OCI-LY7 (cell line): ENCODE measurements at regions of chr1 and their contacts with region 1.

Region 1: GRCh38 chr1:112955781-112956543 is at the start of gene SLC16A1:
- DNase-seq: peak; percentile 94
- H3K4me3 ChIP-seq: peak within 1 kb of the TSS; percentile 88
- H3K27ac ChIP-seq: peak within 1 kb of the TSS; percentile 87
- H3K4me1 ChIP-seq: peaks cover 45% of the 10 kb centered on the region
- CTCF ChIP-seq: peak; percentile 35; the same call in 1 of the 2 replicates
- total RNA-seq, gene SLC16A1: 50.9 and 56.1 TPM in 2 replicates

Region 2: DNA sequence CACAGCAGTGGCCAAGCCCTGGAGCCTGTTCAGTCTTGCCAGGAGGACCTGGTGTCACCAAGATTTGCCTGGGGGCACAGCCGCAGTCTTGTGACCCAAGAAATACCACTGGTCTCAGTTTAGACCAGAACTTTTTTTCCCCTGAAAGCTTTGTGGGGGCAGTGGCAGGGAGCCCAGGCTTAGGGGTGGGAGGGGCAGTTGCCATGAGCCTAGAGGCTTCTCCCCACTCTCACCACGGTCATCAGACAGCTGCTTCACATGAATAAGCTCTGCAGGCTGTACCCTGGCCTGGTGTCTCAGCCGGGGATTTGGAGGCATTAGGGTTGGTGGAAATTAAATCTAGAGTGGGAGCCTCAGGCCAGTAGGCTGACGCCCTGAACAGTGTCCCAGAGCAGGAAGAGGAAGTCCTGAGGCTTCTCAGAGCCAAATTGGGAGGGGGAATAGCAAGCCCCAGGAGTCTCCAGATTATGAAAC is 73.7 kb before region 1 on chr1:
- CTCF ChIA-PET with region 1: interaction called, 3 read pairs
- POLR2A ChIA-PET with region 1: interaction called, 8 read pairs
- intact Hi-C with region 1: loop called (anchors 2 kb)
- DNase-seq: no peak
- H3K4me3 ChIP-seq: no peak overlapping the region
- H3K27ac ChIP-seq: no peak overlapping the region
- H3K4me1 ChIP-seq: no peaks in the 10 kb centered on the region
- CTCF ChIP-seq: no peak

Region 3: DNA sequence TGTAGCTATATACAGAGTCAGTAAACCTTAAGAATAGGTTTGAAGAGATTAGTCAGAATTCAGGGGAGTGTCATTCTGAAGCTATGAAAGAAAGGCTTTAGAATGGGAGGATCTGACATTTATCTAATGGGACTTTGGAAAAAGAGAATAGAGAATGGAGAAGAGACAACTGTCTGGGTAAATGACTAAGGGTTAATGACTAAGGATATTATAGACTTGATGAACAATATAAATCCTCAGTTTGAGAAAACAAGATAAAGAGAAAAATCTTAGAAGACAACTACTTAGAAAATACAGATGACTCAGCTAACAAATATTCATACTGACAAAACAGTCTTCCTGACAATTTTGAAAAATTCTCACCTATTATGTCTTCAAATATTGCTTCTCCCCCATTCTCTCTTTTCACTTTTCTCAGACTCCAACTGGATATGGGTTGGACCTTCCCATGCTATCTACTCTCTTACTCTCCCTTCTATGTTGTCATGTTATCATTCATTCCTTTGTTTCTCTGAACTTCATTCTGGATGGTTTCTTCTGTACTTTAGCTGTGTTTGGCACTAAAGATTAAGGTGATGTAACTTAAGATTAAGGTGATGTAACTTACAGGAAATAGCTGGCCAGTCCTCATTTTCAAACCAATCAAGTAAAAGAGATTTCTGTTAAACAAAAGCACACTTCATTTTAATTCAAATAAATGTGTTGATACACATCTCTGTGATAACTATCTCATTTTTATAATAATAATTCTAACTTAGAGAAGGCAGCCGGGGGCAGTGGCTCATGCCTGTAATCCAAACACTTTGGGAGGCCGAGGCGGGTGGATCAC is 20.3 kb before region 1 on chr1:
- CTCF ChIA-PET with region 1: interaction called, 4 read pairs
- POLR2A ChIA-PET with region 1: interaction called, 31 read pairs
- intact Hi-C with region 1: loop called (anchors 2 kb)
- DNase-seq: peak; percentile 22
- H3K4me3 ChIP-seq: no peak overlapping the region
- H3K27ac ChIP-seq: peak overlapping the region; percentile 43
- H3K4me1 ChIP-seq: peaks cover 40% of the 10 kb centered on the region
- CTCF ChIP-seq: no peak

Region 4: DNA sequence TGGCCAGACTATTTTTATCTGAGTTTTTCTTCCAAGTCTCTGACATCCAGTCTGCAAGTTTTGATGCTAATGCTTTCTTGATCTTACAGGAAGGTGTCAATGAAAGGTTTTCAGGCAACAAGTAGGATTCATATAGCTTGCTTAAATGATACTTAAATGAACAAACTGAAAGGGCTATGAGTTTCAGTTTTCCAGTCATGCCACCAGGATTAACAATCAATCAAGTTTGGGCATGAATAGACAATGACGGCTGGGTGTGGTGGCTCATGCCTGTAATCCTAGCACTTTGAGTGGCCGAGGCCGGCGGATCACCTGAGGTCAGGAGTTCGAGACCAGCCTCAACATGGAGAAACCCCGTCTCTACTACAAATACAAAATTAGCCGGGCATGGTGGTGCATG is 34.3 kb after region 1 on chr1:
- CTCF ChIA-PET with region 1: no interaction called
- POLR2A ChIA-PET with region 1: no interaction called
- intact Hi-C with region 1: no loop called
- DNase-seq: no peak
- H3K4me3 ChIP-seq: no peak overlapping the region
- H3K27ac ChIP-seq: no peak overlapping the region
- H3K4me1 ChIP-seq: no peaks in the 10 kb centered on the region
- CTCF ChIP-seq: no peak

Region 5: DNA sequence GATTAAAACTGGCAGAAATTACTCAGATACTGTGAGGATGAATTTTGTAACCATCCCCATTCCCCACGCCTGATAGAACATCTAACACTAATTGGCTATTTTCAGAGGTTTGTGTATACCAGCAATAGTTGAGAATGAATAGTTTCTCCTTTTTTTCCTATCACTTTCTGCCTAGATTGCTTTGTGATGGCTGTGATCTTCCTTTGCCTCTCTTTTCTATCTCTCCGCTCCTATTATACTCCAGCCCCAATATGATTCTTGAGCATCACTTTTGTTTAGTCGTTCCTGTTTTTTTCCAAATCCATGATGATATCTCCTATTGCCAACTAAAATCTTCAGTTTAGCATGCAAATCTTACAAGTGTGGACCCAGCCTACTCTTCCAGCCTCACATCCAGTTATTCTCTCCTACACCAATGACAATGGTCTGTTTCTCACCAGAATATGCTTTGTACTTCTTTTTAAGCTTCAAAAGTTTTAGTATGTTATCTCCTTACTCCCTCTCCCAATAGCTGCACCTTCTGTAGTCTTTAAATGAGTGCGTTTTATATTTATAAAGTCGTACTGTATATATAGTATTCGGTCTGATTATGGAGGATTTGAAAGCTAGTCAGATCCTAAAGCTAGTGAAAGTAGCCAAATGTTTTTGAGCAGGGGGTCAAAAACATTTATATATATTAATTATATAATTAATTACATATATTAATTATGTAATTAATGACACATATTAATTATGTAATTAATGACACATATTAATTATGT is 459.5 kb after region 1 on chr1:
- CTCF ChIA-PET with region 1: no interaction called
- POLR2A ChIA-PET with region 1: no interaction called
- intact Hi-C with region 1: no loop called
- DNase-seq: no peak
- H3K4me3 ChIP-seq: no peak overlapping the region
- H3K27ac ChIP-seq: no peak overlapping the region
- H3K4me1 ChIP-seq: no peaks in the 10 kb centered on the region
- CTCF ChIP-seq: no peak